CD4-positive, alpha-beta T cell (primary cell): ENCODE measurements at regions of chr3 and their contacts with region 1.

Region 1: GRCh38 chr3:56775838-56776555 is 25.8 kb downstream of the ARHGEF3 start:
- DNase-seq: no peak
- ATAC-seq: no peak
- H3K4me3 ChIP-seq: no peak overlapping the region
- H3K4me3 Mint-ChIP-seq: peak overlapping the region; percentile 34
- H3K27ac ChIP-seq: no peak overlapping the region
- H3K27ac Mint-ChIP-seq: peak overlapping the region; percentile 71
- H3K4me1 ChIP-seq: peaks cover 57% of the 10 kb centered on the region
- H3K4me1 Mint-ChIP-seq: peaks cover 91% of the 10 kb centered on the region
- H3K27me3 ChIP-seq: no peaks in the 10 kb centered on the region
- H3K27me3 Mint-ChIP-seq: no peaks in the 10 kb centered on the region
- CTCF ChIP-seq: no peak

Region 2: GRCh38 chr3:56790016-56790821 is 14.2 kb after region 1 on chr3:
- CTCF ChIA-PET with region 1: no interaction called
- POLR2A ChIA-PET with region 1: interaction called, 15 read pairs
- intact Hi-C with region 1: no loop called
- DNase-seq: peak in 4 of 14 experiments; percentile 54 to 82 (median 63)
- ATAC-seq: peak; percentile 51
- H3K4me3 ChIP-seq: no peak overlapping the region
- H3K4me3 Mint-ChIP-seq: peak overlapping the region; percentile 74
- H3K27ac ChIP-seq: peak overlapping the region; percentile 59 to 70
- H3K27ac Mint-ChIP-seq: peak overlapping the region; percentile 88
- H3K4me1 ChIP-seq: peaks cover 85% of the 10 kb centered on the region
- H3K4me1 Mint-ChIP-seq: peaks cover 89% of the 10 kb centered on the region
- H3K27me3 ChIP-seq: no peaks in the 10 kb centered on the region
- H3K27me3 Mint-ChIP-seq: no peaks in the 10 kb centered on the region
- CTCF ChIP-seq: no peak